ENCODE measurements at regions of chr1 and their contacts with region 1.

Region 1: DNA sequence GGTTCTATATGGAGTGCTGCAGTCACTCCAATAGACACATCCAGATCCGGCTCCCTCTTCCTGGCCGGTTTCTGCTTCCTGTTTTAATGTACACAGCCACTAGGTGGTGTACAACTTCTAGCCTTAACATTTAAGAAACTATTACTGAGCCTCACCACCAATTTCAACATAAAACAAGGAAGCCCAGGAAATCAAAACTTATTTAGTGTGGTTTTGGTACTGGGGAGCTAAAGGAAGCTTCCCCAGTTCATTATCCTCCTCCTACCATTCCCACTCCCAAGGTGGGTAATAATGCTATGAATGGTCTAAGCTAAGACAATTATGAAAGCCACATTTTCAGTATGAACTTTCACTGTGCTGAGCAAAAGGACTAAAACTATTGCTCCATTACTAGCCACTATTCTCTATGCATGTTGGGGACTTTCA is 25.5 kb upstream of the MTMR11 start:
- DNase-seq: peak; percentile 63 to 78 (median 67)
- ATAC-seq: peak; percentile 94
- H3K4me3 ChIP-seq: no peak overlapping the region
- H3K27ac ChIP-seq: peak overlapping the region in 2 of 4 donors; percentile 16 to 67
- H3K4me1 ChIP-seq: peaks cover 13% of the 10 kb centered on the region
- H3K27me3 ChIP-seq: no peaks in the 10 kb centered on the region
- CTCF ChIP-seq: peak; percentile 49 to 92 (median 84)
- POLR2A ChIP-seq: no peak

Region 2: GRCh38 chr1:150053926-150054325 is 91.8 kb after region 1 on chr1:
- intact Hi-C with region 1: loop called (anchors 5 kb)
- DNase-seq: no peak
- ATAC-seq: no peak
- H3K4me3 ChIP-seq: no peak overlapping the region
- H3K27ac ChIP-seq: no peak overlapping the region
- H3K4me1 ChIP-seq: no peaks in the 10 kb centered on the region
- H3K27me3 ChIP-seq: no peaks in the 10 kb centered on the region
- CTCF ChIP-seq: no peak
- POLR2A ChIP-seq: no peak

Measured in body of pancreas (tissue), 4 donors.